Mammary epithelial cell (primary cell): ENCODE measurements at regions of chr6 and their contacts with region 1.

Region 1: DNA sequence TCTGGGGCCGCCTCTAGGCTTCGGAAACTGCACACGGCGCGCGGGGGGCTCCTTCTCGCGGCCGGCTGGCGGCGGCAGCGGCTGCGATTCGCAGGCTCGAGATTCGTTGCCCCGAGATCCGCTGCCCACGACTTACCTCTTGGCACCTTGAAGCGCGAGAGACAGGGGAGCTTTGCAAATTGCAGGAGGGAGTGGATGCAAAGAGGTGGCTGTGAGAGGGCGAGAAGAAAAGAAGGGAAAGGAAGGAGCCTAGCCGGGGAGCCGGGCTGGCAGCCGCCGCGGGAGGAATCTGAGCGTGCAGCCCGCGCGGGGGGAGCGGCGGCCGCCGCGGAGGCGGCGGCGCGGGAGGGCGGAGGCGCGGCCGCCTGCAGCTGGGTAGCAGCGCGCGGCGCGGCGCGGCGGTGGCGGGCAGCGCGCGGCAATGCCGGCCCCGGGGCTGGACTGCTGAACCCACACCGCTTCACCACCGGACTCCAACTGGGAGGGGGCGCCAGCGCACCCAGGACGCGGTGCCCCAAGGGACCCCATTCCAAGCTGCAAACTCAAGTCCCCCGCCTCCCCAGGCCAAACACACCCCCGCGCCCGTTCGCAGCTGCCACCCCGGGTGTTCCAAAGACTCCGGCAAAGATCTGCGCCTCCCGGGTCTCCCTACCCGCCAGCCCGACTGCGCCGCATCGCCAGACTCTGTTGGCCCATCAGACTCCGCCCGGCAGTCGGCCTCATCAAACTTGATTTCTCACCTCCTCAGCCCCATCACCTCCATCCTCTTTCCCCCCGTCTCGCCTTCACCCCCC is 44.2 kb upstream of the SUPT3H start:
- DNase-seq: peak; percentile 66
- H3K4me3 ChIP-seq: peak overlapping the region; percentile 68 to 91 (median 88)
- H3K27ac ChIP-seq: peak overlapping the region; percentile 36
- H3K4me1 ChIP-seq: peaks cover 27% of the 10 kb centered on the region
- H3K27me3 ChIP-seq: no peaks in the 10 kb centered on the region
- CTCF ChIP-seq: peak in 1 of 2 donors; percentile 52

Region 2: DNA sequence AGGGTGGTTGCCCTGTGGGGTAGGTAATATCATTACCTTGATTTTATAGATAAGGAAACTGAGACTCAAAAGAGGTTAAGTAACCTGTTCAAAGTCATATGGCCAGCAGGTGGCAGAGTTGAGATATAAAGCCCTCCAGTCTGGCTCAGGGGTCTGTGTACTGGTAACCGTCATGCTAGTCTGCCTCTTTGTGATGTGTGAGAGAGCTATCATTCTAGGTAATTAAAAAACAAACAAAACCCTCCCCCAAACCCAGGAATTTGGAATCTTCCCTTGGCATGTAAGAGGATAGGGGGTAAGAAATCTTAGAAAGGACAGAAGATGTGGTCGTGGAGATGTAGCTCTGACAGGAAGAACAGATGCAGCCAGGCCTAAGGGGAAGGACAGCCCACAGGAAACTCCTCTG is 828.4 kb before region 1 on chr6:
- CTCF ChIA-PET with region 1: no interaction called
- dilution Hi-C with region 1: no loop called
- in situ Hi-C with region 1: no loop called
- intact Hi-C with region 1: loop called (anchors 5 kb)
- DNase-seq: no peak
- H3K4me3 ChIP-seq: no peak overlapping the region
- H3K27ac ChIP-seq: no peak overlapping the region
- H3K4me1 ChIP-seq: no peaks in the 10 kb centered on the region
- H3K27me3 ChIP-seq: no peaks in the 10 kb centered on the region
- CTCF ChIP-seq: peak; percentile 40 to 54

Region 3: DNA sequence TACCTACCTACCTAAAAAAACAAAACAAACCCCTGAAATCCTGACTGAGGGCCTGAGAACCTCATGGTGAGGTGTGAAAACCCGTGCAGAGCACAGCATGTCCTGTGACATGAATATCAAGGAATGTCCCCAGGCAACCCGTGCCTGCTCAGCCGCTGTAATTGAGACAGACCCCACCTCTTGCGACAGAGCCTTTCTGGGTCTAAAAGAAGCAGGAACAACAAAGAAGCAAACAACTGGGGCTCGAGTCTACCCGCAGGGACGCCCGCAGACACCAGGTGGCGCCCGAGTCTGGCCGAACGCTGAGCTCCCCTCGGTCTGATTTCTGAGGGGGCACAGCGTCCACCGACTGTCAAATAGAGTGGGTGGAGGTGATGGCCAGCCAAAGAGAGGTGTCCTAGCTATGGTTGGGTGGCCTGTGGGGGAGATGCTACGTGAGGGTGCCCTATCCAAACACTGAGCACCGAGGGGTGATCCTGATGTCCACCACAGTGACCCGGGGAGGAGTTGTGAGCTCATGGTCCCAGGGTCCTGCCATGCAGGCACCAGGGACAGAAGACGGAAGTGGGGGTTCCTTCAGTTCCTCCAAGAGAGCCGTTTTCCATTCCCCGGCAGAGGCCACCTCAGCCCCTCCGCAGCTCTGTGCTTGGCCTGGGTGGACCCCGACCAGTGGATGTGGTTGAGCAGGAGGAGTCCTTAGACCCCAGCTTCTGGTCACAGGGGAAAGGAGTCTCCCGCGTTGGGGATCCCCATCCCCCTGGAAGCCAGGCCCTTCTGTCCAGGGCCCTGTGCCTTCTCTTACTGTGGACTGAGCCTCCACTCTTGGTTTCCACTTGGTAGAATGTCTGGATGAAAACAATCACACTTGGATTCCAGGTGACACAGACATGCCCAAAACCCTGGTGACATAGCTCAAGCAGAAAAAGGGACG is 766.2 kb before region 1 on chr6:
- CTCF ChIA-PET with region 1: no interaction called
- dilution Hi-C with region 1: no loop called
- in situ Hi-C with region 1: loop called (anchors 5 to 10 kb)
- intact Hi-C with region 1: loop called (anchors 1 kb)
- DNase-seq: peak; percentile 22
- H3K4me3 ChIP-seq: no peak overlapping the region
- H3K27ac ChIP-seq: no peak overlapping the region
- H3K4me1 ChIP-seq: peaks cover 9% of the 10 kb centered on the region
- H3K27me3 ChIP-seq: no peaks in the 10 kb centered on the region
- CTCF ChIP-seq: peak; percentile 88 to 93

Region 4: DNA sequence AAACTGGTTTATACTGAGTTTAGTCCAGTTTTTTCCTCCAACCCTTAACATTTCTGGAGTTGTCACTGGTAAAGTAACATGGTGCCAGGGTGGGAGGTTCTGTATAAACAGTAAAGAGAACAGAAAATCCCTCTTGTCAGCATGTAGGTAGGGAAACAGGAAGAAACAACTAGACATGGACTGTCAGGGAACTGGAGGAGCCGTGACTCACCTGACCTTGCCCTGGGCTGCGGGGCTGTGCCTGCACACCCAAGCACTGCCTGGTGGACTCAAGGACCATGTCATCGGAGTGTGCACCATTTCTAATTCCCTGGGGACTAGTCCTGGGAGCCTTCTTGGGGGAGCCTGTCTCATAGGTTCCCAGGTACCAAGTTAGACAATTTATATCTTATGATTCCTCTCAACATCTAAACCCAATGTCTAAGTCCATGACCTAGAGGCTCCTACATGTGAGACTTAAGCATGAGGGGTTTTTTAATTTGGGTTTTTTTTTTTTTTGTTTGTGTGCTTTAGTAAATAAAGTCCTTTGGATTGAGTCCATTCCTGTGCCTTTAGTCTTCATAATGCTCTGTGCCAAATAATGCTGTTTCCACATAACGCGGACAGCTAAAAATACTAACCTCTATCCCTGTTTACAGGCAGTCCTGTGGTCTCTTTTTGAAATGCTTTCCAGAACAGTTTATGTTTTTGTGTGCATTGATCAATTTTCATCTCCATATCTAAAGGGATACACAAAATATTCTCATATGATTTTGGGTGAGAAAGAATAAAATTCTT is 92.7 kb after region 1 on chr6:
- CTCF ChIA-PET with region 1: no interaction called
- dilution Hi-C with region 1: no loop called
- in situ Hi-C with region 1: no loop called
- intact Hi-C with region 1: no loop called
- DNase-seq: peak; percentile 5
- H3K4me3 ChIP-seq: no peak overlapping the region
- H3K27ac ChIP-seq: no peak overlapping the region
- H3K4me1 ChIP-seq: no peaks in the 10 kb centered on the region
- H3K27me3 ChIP-seq: no peaks in the 10 kb centered on the region
- CTCF ChIP-seq: no peak

Region 5: DNA sequence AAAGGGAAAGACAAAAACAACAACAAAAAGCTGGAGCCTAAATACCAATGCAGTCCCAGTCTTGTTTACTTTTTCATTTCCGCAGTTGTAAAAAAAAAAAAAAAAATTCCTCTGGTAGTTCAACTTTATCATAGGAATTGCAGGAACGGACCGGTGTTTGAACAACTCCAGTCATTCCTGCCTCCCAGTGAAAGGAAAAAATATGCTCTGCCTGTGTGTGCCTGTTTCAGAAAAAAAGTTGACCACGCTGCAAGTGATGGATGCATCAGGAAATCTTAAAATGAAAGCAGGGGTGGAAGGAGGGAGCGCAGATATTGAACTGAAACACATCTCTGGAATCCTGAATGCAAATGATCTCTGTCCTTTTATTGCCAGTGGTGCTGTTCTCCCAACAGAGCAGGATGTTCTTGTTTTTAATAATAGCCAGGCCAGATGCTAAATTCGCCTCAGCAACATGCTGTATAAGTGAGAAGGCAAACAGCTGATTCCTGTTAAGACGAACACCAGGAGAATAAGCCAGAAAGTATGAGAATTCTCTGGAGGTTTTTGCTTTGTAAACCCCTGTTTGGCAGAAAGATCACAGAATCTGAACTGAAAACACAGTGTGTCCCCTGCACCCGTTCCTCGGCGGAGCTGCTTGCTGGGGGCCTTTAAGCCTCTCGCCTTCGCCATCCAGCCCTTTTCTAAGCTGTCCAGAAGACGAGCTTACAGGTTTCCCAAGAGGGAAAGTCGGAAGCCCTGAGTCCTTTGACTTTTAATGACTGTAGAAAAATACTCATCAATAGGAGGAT is 134.3 kb after region 1 on chr6:
- CTCF ChIA-PET with region 1: no interaction called
- dilution Hi-C with region 1: no loop called
- in situ Hi-C with region 1: no loop called
- intact Hi-C with region 1: loop called (anchors 10 kb)
- DNase-seq: no peak
- H3K4me3 ChIP-seq: peak overlapping the region in 1 of 3 experiments; percentile 8
- H3K27ac ChIP-seq: no peak overlapping the region
- H3K4me1 ChIP-seq: peaks cover 11% of the 10 kb centered on the region
- H3K27me3 ChIP-seq: no peaks in the 10 kb centered on the region
- CTCF ChIP-seq: no peak

Region 6: GRCh38 chr6:45835721-45836438 is 414.0 kb after region 1 on chr6:
- CTCF ChIA-PET with region 1: no interaction called
- dilution Hi-C with region 1: no loop called
- in situ Hi-C with region 1: no loop called
- intact Hi-C with region 1: loop called (anchors 5 kb)
- DNase-seq: peak; percentile 82
- H3K4me3 ChIP-seq: no peak overlapping the region
- H3K27ac ChIP-seq: peak overlapping the region; percentile 51
- H3K4me1 ChIP-seq: peaks cover 27% of the 10 kb centered on the region
- H3K27me3 ChIP-seq: no peaks in the 10 kb centered on the region
- CTCF ChIP-seq: peak; percentile 20 to 30